ENCODE measurements at regions of chr5 and their contacts with region 1.

Region 1: GRCh38 chr5:136769900-136770684 is 404.7 kb upstream of the TRPC7 start:
- DNase-seq: peak; percentile 79
- ATAC-seq: peak; percentile 77
- H3K4me3 ChIP-seq: no peak overlapping the region
- H3K27ac ChIP-seq: no peak overlapping the region
- H3K4me1 ChIP-seq: no peaks in the 10 kb centered on the region
- H3K27me3 ChIP-seq: no peaks in the 10 kb centered on the region
- CTCF ChIP-seq: peak; percentile 84

Region 2: GRCh38 chr5:136249678-136250266 is 520.3 kb before region 1 on chr5:
- CTCF ChIA-PET with region 1: no interaction called
- POLR2A ChIA-PET with region 1: no interaction called
- intact Hi-C with region 1: loop called (anchors 1 kb)
- DNase-seq: peak; percentile 63
- ATAC-seq: peak; percentile 89
- H3K4me3 ChIP-seq: no peak overlapping the region
- H3K27ac ChIP-seq: no peak overlapping the region
- H3K4me1 ChIP-seq: no peaks in the 10 kb centered on the region
- H3K27me3 ChIP-seq: peaks cover 24% of the 10 kb centered on the region
- CTCF ChIP-seq: peak; percentile 88

Region 3: DNA sequence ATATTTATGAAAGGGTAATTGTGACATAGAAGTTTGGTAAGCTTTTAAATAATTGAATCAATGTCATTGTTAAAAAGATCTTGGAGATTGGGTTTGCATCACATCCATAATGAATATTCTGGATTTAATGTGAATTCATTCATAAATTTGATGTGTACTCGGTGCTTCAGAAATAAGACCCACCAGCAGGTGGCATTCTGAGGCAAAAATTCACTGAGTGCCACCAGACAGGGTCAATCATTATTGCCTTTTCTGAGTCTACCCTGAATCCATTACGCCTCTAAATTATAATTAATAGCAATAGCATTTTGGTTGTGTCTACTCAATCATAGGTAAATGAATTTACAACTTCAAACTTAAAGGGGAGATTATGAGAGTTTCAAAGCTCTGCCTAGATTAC is 405.8 kb before region 1 on chr5:
- CTCF ChIA-PET with region 1: no interaction called
- POLR2A ChIA-PET with region 1: no interaction called
- intact Hi-C with region 1: loop called (anchors 2 kb)
- DNase-seq: peak; percentile 20
- ATAC-seq: no peak
- H3K4me3 ChIP-seq: no peak overlapping the region
- H3K27ac ChIP-seq: no peak overlapping the region
- H3K4me1 ChIP-seq: no peaks in the 10 kb centered on the region
- H3K27me3 ChIP-seq: 0 out of 2 replicates have a peak, but pooled peaks cover 7% of the 10 kb centered on the region
- CTCF ChIP-seq: peak; percentile 67

Region 4: GRCh38 chr5:136638077-136638476 is 132.0 kb before region 1 on chr5:
- CTCF ChIA-PET with region 1: interaction called, 7 read pairs
- POLR2A ChIA-PET with region 1: interaction called, 3 read pairs
- intact Hi-C with region 1: loop called (anchors 1 kb)
- DNase-seq: peak; percentile 12
- ATAC-seq: peak; percentile 70
- H3K4me3 ChIP-seq: no peak overlapping the region
- H3K27ac ChIP-seq: no peak overlapping the region
- H3K4me1 ChIP-seq: no peaks in the 10 kb centered on the region
- H3K27me3 ChIP-seq: no peaks in the 10 kb centered on the region
- CTCF ChIP-seq: peak; percentile 42; the same call in 1 of the 2 replicates

Region 5: DNA sequence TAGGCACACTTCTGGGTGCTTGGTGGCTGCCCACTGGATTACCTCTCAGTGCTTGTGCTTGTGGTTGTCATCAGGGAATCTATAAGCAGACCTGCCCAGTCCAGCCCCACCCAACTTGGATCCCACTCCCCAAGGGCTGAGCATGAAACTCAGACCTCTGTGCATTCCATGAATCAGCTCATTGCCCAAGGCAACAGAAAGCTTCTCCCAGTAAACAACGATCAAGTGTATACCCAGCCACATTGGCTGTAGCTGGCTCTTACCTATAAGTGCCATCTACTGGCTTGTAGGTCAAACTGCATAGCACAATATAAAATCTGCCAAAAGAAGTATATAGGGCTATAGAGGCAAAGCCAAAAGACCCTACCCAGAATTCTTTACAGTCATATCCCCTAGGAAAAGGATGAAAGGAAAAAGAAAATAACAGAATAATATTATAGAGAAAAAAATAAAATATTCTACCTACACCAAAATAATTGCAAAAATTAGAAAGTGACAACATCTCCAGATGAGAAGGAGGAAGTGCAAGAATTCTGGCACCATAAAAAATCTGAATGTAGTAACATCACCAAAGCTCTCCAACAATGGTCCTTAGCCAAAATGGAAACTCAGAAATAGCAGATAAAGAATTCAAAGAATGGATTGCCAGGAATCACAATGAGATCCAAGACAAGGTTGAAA is 83.8 kb before region 1 on chr5:
- CTCF ChIA-PET with region 1: no interaction called
- POLR2A ChIA-PET with region 1: no interaction called
- intact Hi-C with region 1: loop called (anchors 1 kb)
- DNase-seq: peak; percentile 83
- ATAC-seq: peak; percentile 80
- H3K4me3 ChIP-seq: no peak overlapping the region
- H3K27ac ChIP-seq: peak overlapping the region; percentile 20; the same call in 1 of the 2 replicates
- H3K4me1 ChIP-seq: peaks cover 4% of the 10 kb centered on the region
- H3K27me3 ChIP-seq: no peaks in the 10 kb centered on the region
- CTCF ChIP-seq: peak; percentile 65

Region 6: DNA sequence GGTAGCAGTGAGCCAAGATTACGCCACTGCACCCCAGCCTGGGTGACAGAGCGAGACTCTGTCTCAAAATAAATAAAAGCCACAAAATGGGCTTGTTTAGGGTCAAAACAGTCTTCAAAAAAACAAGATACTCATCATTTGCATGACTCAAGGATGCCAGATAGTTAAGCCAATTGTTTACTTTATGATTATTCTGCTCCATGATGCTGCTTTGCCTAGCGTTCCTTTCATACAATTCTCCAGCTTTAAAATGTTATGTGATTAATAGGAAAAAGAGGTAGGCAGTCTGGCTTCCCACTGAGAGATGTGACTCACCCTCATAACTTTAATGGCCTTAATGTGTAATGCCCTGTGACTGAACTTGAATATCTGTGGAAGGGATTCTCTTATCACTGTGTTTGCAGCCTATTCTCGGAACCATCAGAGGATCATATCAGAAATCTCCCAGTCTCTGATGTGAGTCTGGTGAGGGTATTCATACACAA is 40.1 kb before region 1 on chr5:
- CTCF ChIA-PET with region 1: no interaction called
- POLR2A ChIA-PET with region 1: no interaction called
- intact Hi-C with region 1: loop called (anchors 2 kb)
- DNase-seq: peak; percentile 94
- ATAC-seq: peak; percentile 75
- H3K4me3 ChIP-seq: peak overlapping the region; percentile 51; the same call in 1 of the 2 replicates
- H3K27ac ChIP-seq: peak overlapping the region; percentile 100
- H3K4me1 ChIP-seq: peaks cover 39% of the 10 kb centered on the region
- H3K27me3 ChIP-seq: no peaks in the 10 kb centered on the region
- CTCF ChIP-seq: no peak